ENCODE measurements at regions of chr16 and their contacts with region 1.

Region 1: GRCh38 chr16:81873843-81874752 is 95.0 kb downstream of the PLCG2 start:
- DNase-seq: peak; percentile 63
- CTCF ChIP-seq: peak; percentile 75

Region 2: GRCh38 chr16:81730090-81731051 is 143.7 kb before region 1 on chr16:
- CTCF ChIA-PET with region 1: interaction called, 11 read pairs
- POLR2A ChIA-PET with region 1: no interaction called
- DNase-seq: peak; percentile 79
- CTCF ChIP-seq: peak; percentile 65

Region 3: GRCh38 chr16:81778861-81779535 is 95.1 kb before region 1 on chr16 and contains the start of gene PLCG2:
- CTCF ChIA-PET with region 1: interaction called, 14 read pairs
- POLR2A ChIA-PET with region 1: no interaction called
- DNase-seq: peak; percentile 92
- CTCF ChIP-seq: no peak

Region 4: DNA sequence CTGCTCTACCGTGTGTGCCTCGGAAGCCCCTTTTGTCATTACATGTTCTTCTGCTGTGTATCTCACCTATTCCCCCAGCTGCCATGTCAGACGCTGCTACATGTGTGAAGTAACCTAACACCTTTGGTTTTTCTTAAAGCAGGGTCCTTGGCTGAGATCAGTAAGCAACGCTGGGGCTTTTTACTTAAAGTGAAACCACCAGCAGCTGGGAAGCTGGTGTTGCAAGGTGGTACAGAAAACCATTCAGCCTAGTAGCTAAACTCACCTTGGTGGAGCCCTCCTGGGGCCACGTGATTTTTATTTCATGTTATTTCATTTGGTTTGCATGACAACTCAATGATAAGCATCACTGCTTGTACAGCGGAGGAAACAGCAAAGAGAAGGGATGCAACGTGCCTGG is 32.4 kb before region 1 on chr16:
- CTCF ChIA-PET with region 1: interaction called, 22 read pairs
- POLR2A ChIA-PET with region 1: no interaction called
- DNase-seq: peak; percentile 51
- CTCF ChIP-seq: no peak

Region 5: DNA sequence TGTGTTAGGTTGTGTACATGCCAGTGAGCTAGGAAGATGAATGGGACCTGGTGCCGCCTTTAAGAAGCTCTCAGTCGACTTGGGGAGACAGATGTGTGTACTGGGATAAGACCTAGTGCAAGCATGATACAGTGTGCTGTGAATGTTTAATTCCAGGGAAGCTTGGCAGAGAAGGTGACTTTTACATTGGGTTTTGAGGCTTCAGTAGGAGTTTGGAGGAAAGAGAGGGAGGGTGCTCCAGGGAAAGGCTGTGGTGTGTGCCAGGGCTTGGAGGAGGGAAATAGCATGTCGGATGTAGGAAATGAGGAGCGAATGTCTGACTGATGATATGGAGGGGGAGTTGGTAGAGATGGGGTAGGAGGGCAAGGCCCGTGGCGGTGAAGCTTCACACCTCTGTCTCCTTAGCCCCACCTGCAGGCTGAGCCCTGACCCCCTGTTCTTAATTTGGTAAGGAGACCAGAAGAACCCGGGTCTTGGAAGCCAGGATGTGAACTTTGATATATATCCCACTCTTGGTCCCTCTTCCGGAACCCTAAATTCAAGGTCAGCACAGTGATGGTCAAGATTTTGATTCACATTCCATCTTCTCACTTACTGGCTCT is 18.4 kb before region 1 on chr16:
- CTCF ChIA-PET with region 1: interaction called, 56 read pairs
- POLR2A ChIA-PET with region 1: no interaction called
- DNase-seq: no peak
- CTCF ChIP-seq: no peak

Region 6: DNA sequence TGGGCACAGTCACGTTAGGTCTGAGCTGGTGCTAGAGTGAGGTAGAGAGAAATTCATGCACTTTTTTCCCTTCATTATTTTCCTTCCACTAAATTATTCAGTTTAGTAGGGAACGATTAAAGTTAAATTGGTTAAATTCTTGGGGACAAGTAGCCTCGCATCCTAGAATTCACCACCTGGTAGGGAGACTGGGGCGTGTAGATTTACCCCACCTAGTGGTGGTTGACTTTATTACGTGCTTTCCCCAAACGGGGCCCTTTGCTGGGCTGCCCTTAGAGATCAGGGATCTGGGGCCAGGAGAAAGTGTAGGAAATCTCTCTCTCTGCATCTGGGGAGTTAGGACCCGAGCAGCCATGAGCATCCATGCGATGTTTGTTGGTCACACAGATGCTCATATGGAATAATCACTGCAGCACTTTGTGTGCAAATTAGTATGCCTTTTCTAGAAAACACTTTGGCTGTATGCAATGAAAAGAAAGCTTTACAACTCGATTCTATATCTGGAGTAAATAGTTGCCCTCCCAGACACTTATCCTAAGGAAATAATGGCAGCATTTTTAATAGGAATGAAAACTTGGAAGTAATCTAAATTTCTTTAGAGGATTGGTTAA is 12.0 kb after region 1 on chr16:
- CTCF ChIA-PET with region 1: interaction called, 76 read pairs
- POLR2A ChIA-PET with region 1: no interaction called
- DNase-seq: peak; percentile 66
- CTCF ChIP-seq: peak; percentile 49

Region 7: GRCh38 chr16:81901483-81901882 is 27.4 kb after region 1 on chr16:
- CTCF ChIA-PET with region 1: interaction called, 14 read pairs
- POLR2A ChIA-PET with region 1: no interaction called
- DNase-seq: no peak
- CTCF ChIP-seq: no peak